ENCODE measurements at regions of chr12 and their contacts with region 1.

Region 1: DNA sequence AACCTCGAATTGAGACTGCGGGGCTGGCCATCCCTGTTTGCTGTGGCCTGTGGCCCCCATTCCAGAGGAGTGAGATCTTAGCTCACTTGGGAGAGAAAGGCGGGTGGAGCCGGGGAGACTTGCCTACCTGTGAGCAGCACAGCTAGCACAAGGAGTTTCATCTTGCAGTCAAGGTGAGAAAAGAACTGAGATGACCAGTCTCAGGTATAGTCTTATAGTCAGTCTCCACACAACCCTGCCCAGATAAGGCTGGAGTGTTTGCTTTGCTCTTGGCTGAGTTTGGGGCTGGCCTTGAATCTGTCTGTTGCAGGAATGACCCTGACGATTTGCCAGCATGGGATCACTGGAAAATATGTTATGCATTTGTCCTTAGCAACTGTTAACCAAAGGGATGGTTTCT is at the start of gene PLA2G1B:
- DNase-seq: peak in 3 of 5 donors; percentile 26 to 52 (median 49)
- H3K4me3 ChIP-seq: no peak within 1 kb of the TSS
- H3K27ac ChIP-seq: peak within 1 kb of the TSS in 1 of 2 donors; percentile 26
- H3K4me1 ChIP-seq: peaks cover 6% of the 10 kb centered on the region
- H3K27me3 ChIP-seq: no peaks in the 10 kb centered on the region
- CTCF ChIP-seq: no peak
- EP300 ChIP-seq: no peak
- POLR2A ChIP-seq: no peak
- total RNA-seq, gene PLA2G1B: 0.67 to 17.0 (median 2.9) TPM

Region 2: DNA sequence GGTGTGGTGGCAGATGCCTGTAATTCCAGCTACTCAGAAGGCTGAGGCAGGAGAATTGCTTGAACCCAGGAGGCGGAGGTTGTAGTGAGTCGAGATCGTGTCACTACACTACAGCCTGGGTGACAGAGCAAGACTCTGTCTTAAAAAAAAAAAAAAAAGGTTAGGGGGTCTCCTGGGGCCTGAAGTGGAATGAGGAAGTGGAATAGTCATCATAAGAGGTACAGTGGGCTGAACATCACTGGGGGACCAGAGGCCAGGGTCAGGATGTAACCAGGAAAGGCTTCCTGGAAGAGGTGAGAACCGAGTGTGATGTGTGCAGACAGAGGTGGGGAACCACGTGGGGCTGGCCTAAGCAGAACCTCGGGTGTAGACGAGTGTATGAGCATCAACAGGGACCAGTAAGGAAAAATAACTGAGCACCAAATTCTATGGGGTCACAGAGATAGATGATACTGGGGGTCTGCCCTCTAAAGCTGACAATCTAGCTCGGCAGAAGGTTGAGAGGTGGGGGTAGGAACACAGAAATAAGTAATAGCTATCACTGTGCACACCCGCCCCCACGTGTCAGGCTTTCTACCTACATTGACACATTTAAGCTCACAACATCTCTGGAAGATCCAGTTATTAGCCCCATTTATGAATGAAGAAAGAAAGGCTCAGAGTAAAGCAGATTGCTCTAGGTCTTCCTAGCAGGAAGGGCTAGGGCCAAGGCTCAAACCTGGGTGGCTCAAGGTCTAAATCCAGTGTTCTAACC is 105.4 kb after region 1 on chr12:
- intact Hi-C with region 1: loop called in 1 of 4 experiments (anchors 5 kb)
- DNase-seq: no peak
- H3K4me3 ChIP-seq: no peak overlapping the region
- H3K27ac ChIP-seq: no peak overlapping the region
- H3K4me1 ChIP-seq: no peaks in the 10 kb centered on the region
- H3K27me3 ChIP-seq: no peaks in the 10 kb centered on the region
- CTCF ChIP-seq: no peak
- EP300 ChIP-seq: no peak
- POLR2A ChIP-seq: no peak

Measured in ovary (tissue), 10 donors.